RWPE1 (cell line): ENCODE measurements at regions of chr2 and their contacts with region 1.

Region 1: GRCh38 chr2:208040199-208041171 is 15.2 kb upstream of the PLEKHM3 start:
- DNase-seq: peak; percentile 30
- H3K27ac ChIP-seq: no peak overlapping the region
- CTCF ChIP-seq: peak; percentile 66

Region 2: GRCh38 chr2:207782238-207783030 is 258.1 kb before region 1 on chr2:
- CTCF ChIA-PET with region 1: no interaction called
- POLR2A ChIA-PET with region 1: no interaction called
- DNase-seq: no peak
- H3K27ac ChIP-seq: no peak overlapping the region
- CTCF ChIP-seq: no peak

Region 3: DNA sequence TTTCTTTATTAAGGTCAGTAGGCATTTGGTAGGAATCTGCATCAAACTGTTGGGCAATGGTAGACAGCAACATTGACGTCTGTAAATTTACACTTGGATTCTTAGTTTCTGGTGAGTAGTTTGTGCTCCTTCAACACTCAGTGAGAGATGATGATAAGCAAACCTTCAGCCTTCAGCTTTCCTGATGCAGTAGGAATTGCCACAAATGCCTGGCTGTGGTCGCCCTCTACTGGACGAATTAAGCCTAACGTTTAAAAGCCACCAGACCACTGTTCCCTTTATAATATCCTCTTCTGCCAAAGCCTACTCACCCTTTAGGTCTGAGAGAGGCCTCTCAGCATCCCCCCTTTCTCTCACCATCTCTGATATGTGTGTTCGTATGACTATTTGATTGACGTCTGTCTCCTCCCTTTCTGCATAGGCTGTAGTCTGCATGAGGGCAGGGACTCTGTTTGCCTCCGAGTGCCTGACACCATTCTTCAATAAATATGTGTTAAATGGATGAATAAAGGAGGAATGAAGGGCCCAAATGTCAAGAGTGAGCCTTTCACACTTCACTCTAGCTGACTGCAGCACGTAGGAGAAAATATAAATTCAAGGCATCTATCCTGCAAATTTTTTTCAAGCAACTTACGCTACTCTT is 31.9 kb after region 1 on chr2:
- CTCF ChIA-PET with region 1: interaction called, 11 read pairs
- POLR2A ChIA-PET with region 1: no interaction called
- DNase-seq: peak; percentile 64
- H3K27ac ChIP-seq: no peak overlapping the region
- CTCF ChIP-seq: peak; percentile 85